ENCODE measurements at regions of chr10 and their contacts with region 1.

Region 1: GRCh38 chr10:95346715-95347401 is 56.1 kb upstream of the PDLIM1 start:
- DNase-seq: peak; percentile 29
- H3K4me3 Mint-ChIP-seq: no peak overlapping the region
- H3K27ac Mint-ChIP-seq: peak overlapping the region; percentile 38
- H3K4me1 Mint-ChIP-seq: peaks cover 13% of the 10 kb centered on the region
- H3K27me3 Mint-ChIP-seq: no peaks in the 10 kb centered on the region
- CTCF ChIP-seq: no peak

Region 2: DNA sequence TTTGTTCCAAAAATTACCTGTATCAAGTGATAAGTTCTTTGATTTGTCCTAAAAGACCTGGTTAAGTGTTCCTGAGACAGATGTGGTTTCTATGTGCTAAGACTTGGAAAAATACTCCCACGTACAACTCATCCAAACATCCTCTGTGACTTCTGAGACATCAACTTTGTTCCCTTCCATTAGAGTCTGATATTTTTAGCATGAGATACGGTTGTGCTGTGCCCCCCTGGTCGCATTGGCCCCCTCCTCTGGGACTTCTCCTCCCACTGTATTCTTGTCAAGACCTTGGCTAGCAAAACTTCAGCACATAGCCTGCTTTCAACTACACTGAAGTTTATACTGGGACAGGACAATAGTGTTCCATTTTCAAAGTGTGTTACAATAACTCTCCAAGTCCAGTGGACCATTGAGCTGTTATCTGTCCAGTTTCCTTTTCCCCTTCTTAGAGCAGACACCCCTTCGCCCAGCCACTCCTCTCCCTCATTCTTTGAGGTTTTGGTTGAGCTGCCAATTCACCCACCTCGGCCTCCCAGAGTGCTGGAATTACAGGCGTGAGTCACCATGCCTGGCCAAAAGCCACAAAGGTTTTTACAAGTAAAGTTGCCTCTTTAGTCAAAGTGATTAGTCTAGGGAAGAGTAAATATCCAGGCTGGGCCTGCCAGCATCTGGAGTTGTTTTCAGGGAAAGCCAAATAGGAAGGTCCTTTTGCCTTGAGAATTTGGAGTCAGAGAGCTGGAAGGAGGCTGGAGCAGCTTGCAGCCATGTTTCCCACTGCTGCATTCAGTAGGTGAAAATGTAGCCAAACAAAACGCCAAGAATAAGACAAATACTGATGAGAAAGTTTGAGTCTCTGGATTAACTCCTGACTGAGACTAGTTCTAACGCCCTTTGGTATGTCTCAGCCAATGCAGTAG is 38.2 kb before region 1 on chr10:
- CTCF ChIA-PET with region 1: interaction called, 4 read pairs
- intact Hi-C with region 1: loop called (anchors 5 kb)
- DNase-seq: peak; percentile 81
- H3K4me3 Mint-ChIP-seq: peak overlapping the region; percentile 48
- H3K27ac Mint-ChIP-seq: peak overlapping the region; percentile 88
- H3K4me1 Mint-ChIP-seq: peaks cover 35% of the 10 kb centered on the region
- H3K27me3 Mint-ChIP-seq: peaks cover 10% of the 10 kb centered on the region
- CTCF ChIP-seq: no peak